ENCODE measurements at regions of chr15 and their contacts with region 1.

Region 1: GRCh38 chr15:101088788-101089583 is 162.9 kb downstream of the CHSY1 start:
- DNase-seq: peak; percentile 80
- ATAC-seq: peak; percentile 97
- H3K4me3 ChIP-seq: no peak overlapping the region
- H3K4me3 Mint-ChIP-seq: no peak overlapping the region
- H3K27ac ChIP-seq: no peak overlapping the region
- H3K27ac Mint-ChIP-seq: no peak overlapping the region
- H3K4me1 ChIP-seq: peaks cover 0 to 6% of the 10 kb centered on the region in 2 donors
- H3K4me1 Mint-ChIP-seq: peaks cover 2% of the 10 kb centered on the region
- H3K27me3 ChIP-seq: peaks cover 0 to 3% (median 0%) of the 10 kb centered on the region in 4 experiments
- H3K27me3 Mint-ChIP-seq: no peaks in the 10 kb centered on the region
- CTCF ChIP-seq: peak; percentile 99

Region 2: DNA sequence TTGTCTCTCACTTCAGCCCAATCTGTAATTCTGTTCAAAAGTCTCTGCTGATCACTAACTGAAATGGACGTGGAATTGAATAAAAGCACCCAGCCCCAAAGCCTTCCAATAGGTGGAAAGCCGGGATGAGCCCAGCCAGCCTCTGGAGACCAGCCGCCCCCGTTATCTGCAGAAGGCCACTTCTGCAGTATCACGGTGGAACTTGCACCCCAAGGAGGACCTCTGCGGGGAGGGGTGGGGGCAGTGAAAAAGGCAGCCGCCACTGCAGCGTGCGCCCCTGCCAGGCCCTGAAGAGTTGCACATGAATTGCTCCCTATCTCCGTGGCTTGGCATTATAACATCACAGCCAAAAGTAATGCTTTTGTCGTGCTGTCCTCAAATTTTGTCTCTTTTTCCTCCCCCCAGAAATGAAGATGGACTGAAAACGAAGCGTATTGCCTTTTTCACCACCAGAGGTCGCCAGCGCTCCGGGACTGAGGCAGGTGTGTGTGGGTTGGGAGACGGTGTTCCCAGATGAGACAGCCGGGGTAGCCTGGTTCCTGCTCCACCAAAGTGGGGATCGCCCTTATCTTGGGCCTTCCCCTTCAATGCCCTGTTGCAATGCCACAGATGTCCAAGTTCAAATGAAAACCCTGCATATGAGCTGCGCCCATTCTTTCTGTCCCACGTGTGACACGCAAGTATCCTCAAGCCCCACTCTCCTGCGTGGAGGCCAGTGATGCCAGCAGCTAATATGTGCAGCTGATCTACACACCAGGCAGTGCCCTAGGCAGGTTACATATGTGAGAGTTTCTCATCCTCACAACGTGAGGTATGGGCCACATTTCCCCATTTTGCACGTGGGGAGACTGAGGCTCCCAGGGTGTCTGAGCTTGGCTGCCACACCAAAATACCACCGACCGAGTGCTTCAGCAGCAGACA is 73.8 kb before region 1 on chr15:
- CTCF ChIA-PET with region 1: interaction called, 13 read pairs
- POLR2A ChIA-PET with region 1: no interaction called
- intact Hi-C with region 1: loop called (anchors 5 kb)
- DNase-seq: peak; percentile 73
- ATAC-seq: peak; percentile 65
- H3K4me3 ChIP-seq: no peak overlapping the region
- H3K4me3 Mint-ChIP-seq: no peak overlapping the region
- H3K27ac ChIP-seq: no peak overlapping the region
- H3K27ac Mint-ChIP-seq: no peak overlapping the region
- H3K4me1 ChIP-seq: no peaks in the 10 kb centered on the region
- H3K4me1 Mint-ChIP-seq: no peaks in the 10 kb centered on the region
- H3K27me3 ChIP-seq: no peaks in the 10 kb centered on the region
- H3K27me3 Mint-ChIP-seq: no peaks in the 10 kb centered on the region
- CTCF ChIP-seq: peak; percentile 83

Region 3: DNA sequence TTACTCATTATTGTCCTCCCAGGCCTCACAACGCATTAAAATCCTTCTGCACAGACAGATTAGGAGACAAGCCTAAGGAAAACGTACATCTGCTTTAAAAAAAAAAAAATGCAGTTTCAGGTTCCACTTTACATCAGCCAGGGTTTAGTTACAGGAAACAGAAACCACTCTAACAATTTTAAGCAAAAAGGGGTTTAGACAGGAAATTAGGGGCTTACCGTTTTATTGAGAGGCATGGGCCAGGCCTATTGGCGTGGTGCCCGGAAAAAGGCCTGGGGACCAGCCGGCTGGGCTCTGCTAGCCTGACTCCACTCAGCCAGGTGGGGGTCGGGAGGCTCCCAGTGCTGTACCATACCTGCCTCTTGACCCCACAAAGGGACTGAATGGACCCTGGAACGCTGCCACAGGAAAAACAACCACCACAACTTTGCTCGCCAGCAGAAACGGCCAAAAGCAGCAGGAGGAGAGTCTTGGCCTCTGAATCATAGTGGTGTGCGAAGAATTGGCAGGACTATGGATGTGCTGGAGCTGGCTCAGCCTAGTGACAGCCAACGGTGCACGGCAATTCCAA is 38.6 kb after region 1 on chr15:
- CTCF ChIA-PET with region 1: no interaction called
- POLR2A ChIA-PET with region 1: no interaction called
- intact Hi-C with region 1: loop called (anchors 2 kb)
- DNase-seq: peak; percentile 76
- ATAC-seq: peak; percentile 80
- H3K4me3 ChIP-seq: peak overlapping the region in 3 of 5 experiments; percentile 23 to 49 (median 27)
- H3K4me3 Mint-ChIP-seq: peak overlapping the region; percentile 81
- H3K27ac ChIP-seq: peak overlapping the region; percentile 95 to 97
- H3K27ac Mint-ChIP-seq: peak overlapping the region; percentile 98
- H3K4me1 ChIP-seq: peaks cover 65 to 67% of the 10 kb centered on the region in 2 donors
- H3K4me1 Mint-ChIP-seq: peaks cover 69% of the 10 kb centered on the region
- H3K27me3 ChIP-seq: no peaks in the 10 kb centered on the region
- H3K27me3 Mint-ChIP-seq: no peaks in the 10 kb centered on the region
- CTCF ChIP-seq: no peak

Region 4: GRCh38 chr15:101170568-101171350 is 81.8 kb after region 1 on chr15:
- CTCF ChIA-PET with region 1: no interaction called
- POLR2A ChIA-PET with region 1: no interaction called
- intact Hi-C with region 1: no loop called
- DNase-seq: no peak
- ATAC-seq: no peak
- H3K4me3 ChIP-seq: no peak overlapping the region
- H3K4me3 Mint-ChIP-seq: no peak overlapping the region
- H3K27ac ChIP-seq: no peak overlapping the region
- H3K27ac Mint-ChIP-seq: no peak overlapping the region
- H3K4me1 ChIP-seq: peaks cover 23 to 26% of the 10 kb centered on the region in 2 donors
- H3K4me1 Mint-ChIP-seq: peaks cover 32% of the 10 kb centered on the region
- H3K27me3 ChIP-seq: no peaks in the 10 kb centered on the region
- H3K27me3 Mint-ChIP-seq: no peaks in the 10 kb centered on the region
- CTCF ChIP-seq: no peak

Region 5: GRCh38 chr15:101251830-101252820 is 163.1 kb after region 1 on chr15 and contains the start of gene CHSY1:
- CTCF ChIA-PET with region 1: interaction called, 138 read pairs
- POLR2A ChIA-PET with region 1: interaction called, 4 read pairs
- intact Hi-C with region 1: no loop called
- DNase-seq: peak; percentile 96
- ATAC-seq: peak; percentile 81
- H3K4me3 ChIP-seq: peak within 1 kb of the TSS; percentile 50 to 81 (median 73)
- H3K4me3 Mint-ChIP-seq: peak within 1 kb of the TSS; percentile 93
- H3K27ac ChIP-seq: peak within 1 kb of the TSS; percentile 30 to 53
- H3K27ac Mint-ChIP-seq: peak within 1 kb of the TSS; percentile 97
- H3K4me1 ChIP-seq: peaks cover 29 to 31% of the 10 kb centered on the region in 2 donors
- H3K4me1 Mint-ChIP-seq: peaks cover 30% of the 10 kb centered on the region
- H3K27me3 ChIP-seq: peaks cover 0 to 4% (median 0%) of the 10 kb centered on the region in 4 experiments
- H3K27me3 Mint-ChIP-seq: no peaks in the 10 kb centered on the region
- CTCF ChIP-seq: no peak
- total RNA-seq, gene CHSY1: 18.9 and 20.3 TPM in 2 replicates

Region 6: GRCh38 chr15:101258238-101259144 is 169.5 kb after region 1 on chr15:
- CTCF ChIA-PET with region 1: interaction called, 138 read pairs
- POLR2A ChIA-PET with region 1: interaction called, 4 read pairs
- intact Hi-C with region 1: loop called (anchors 1 kb)
- DNase-seq: peak; percentile 75
- ATAC-seq: peak; percentile 64
- H3K4me3 ChIP-seq: no peak overlapping the region
- H3K4me3 Mint-ChIP-seq: no peak overlapping the region
- H3K27ac ChIP-seq: no peak overlapping the region
- H3K27ac Mint-ChIP-seq: no peak overlapping the region
- H3K4me1 ChIP-seq: no peaks in the 10 kb centered on the region
- H3K4me1 Mint-ChIP-seq: no peaks in the 10 kb centered on the region
- H3K27me3 ChIP-seq: peaks cover 0 to 14% (median 3%) of the 10 kb centered on the region in 4 experiments
- H3K27me3 Mint-ChIP-seq: peaks cover 9% of the 10 kb centered on the region
- CTCF ChIP-seq: peak; percentile 91

Region 7: GRCh38 chr15:101277038-101277882 is 188.3 kb after region 1 on chr15 and contains the start of gene SELENOS:
- CTCF ChIA-PET with region 1: no interaction called
- POLR2A ChIA-PET with region 1: no interaction called
- intact Hi-C with region 1: loop called (anchors 1 kb)
- DNase-seq: peak; percentile 91
- ATAC-seq: peak; percentile 97
- H3K4me3 ChIP-seq: peak within 1 kb of the TSS; percentile 68 to 96 (median 84)
- H3K4me3 Mint-ChIP-seq: peak within 1 kb of the TSS; percentile 96
- H3K27ac ChIP-seq: peak within 1 kb of the TSS; percentile 39 to 85
- H3K27ac Mint-ChIP-seq: peak within 1 kb of the TSS; percentile 84
- H3K4me1 ChIP-seq: peaks cover 10 to 20% of the 10 kb centered on the region in 2 donors
- H3K4me1 Mint-ChIP-seq: peaks cover 12% of the 10 kb centered on the region
- H3K27me3 ChIP-seq: no peaks in the 10 kb centered on the region
- H3K27me3 Mint-ChIP-seq: no peaks in the 10 kb centered on the region
- CTCF ChIP-seq: no peak
- total RNA-seq, gene SELENOS: 26.8 and 27.3 TPM in 2 replicates